Activated CD8-positive, alpha-beta T cell treated with anti-CD3 and anti-CD28 coated beads, Interleukin-2, amount 10 ng/mL, durations not matched to agents 7 days and 5 days (primary cell): ENCODE measurements at regions of chr7 and their contacts with region 1.

Region 1: DNA sequence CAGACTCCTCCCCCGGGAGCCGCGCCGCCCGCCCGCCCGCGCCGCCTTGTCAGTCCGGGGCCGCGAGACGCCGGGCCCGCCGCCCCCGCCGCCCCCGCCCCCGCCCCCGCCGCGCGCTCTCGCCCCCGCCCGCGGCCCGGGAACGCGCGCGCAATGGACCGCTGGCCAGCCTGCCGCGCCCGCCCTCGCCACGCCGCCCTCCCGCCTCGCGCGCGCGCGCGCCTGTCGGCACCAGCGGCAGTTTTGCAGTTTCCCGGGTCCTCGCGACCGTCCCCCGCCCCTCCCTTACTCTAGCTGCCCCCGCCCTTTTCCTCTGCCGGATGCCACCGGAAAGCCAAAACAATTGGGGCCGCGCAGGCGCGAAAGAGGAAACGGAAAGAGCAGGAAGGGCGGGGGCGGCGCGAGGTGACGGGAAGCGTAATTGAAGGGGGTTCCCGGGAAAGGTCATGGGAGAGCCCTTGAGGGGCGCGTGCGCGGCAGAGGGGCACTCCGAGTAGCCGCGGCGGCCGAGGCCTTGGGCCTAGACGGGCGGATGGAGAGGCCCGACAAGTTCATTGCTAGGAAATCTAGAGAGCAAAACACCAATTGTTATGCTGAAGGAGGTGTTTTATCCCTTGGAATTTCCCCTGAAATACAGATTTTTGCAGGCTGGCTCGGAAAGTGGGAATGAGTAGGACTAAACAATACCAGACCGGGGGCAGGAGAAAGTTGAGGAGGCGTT is 400 bp upstream of the KBTBD2 start:
- DNase-seq: peak; percentile 98
- ATAC-seq: peak; percentile 62
- H3K4me3 Mint-ChIP-seq: peak overlapping the region; percentile 80
- H3K27ac Mint-ChIP-seq: peak overlapping the region; percentile 94
- H3K4me1 Mint-ChIP-seq: peaks cover 40% of the 10 kb centered on the region
- H3K27me3 Mint-ChIP-seq: peaks cover 4% of the 10 kb centered on the region

Region 2: GRCh38 chr7:32495298-32496176 is 396.4 kb before region 1 on chr7 and contains the start of gene AVL9:
- CTCF ChIA-PET with region 1: no interaction called
- POLR2A ChIA-PET with region 1: interaction called, 16 read pairs
- DNase-seq: peak; percentile 99
- ATAC-seq: peak; percentile 94
- H3K4me3 Mint-ChIP-seq: peak within 1 kb of the TSS; percentile 81
- H3K27ac Mint-ChIP-seq: peak within 1 kb of the TSS; percentile 99
- H3K4me1 Mint-ChIP-seq: peaks cover 44% of the 10 kb centered on the region
- H3K27me3 Mint-ChIP-seq: no peaks in the 10 kb centered on the region
- total RNA-seq, gene AVL9: 29.6 to 30.1 TPM

Region 3: GRCh38 chr7:32905175-32905662 is 13.3 kb after region 1 on chr7:
- CTCF ChIA-PET with region 1: interaction called, 9 read pairs
- POLR2A ChIA-PET with region 1: interaction called, 71 read pairs
- DNase-seq: peak; percentile 93
- ATAC-seq: peak; percentile 97
- H3K4me3 Mint-ChIP-seq: peak overlapping the region; percentile 77
- H3K27ac Mint-ChIP-seq: peak overlapping the region; percentile 95
- H3K4me1 Mint-ChIP-seq: peaks cover 21% of the 10 kb centered on the region
- H3K27me3 Mint-ChIP-seq: no peaks in the 10 kb centered on the region

Region 4: DNA sequence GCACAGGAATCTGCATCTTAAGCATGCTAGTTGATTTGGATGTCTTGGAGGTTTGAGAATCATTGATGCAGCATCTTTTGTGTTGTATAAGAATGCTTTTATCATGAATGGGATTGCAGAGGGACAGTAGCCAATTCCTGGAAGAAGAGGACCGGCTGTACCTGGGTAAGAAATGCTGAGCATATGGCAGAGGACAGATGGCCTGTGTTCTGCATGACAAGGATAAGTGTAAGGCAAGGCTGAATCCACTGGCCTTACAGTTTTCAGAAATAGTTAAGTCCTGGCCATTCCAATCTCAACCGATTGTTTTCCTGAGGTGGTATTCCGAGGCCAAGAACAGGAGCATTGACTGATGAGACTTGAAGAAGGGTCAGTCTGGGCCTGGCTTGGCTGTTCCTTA is 24.0 kb after region 1 on chr7:
- CTCF ChIA-PET with region 1: no interaction called
- POLR2A ChIA-PET with region 1: no interaction called
- DNase-seq: no peak
- ATAC-seq: no peak
- H3K4me3 Mint-ChIP-seq: no peak overlapping the region
- H3K27ac Mint-ChIP-seq: no peak overlapping the region
- H3K4me1 Mint-ChIP-seq: peaks cover 3% of the 10 kb centered on the region
- H3K27me3 Mint-ChIP-seq: no peaks in the 10 kb centered on the region

Region 5: GRCh38 chr7:32942786-32943653 is 51.1 kb after region 1 on chr7:
- CTCF ChIA-PET with region 1: interaction called, 12 read pairs
- POLR2A ChIA-PET with region 1: interaction called, 10 read pairs
- DNase-seq: peak; percentile 63
- ATAC-seq: peak; percentile 86
- H3K4me3 Mint-ChIP-seq: peak overlapping the region; percentile 63
- H3K27ac Mint-ChIP-seq: no peak overlapping the region
- H3K4me1 Mint-ChIP-seq: peaks cover 17% of the 10 kb centered on the region
- H3K27me3 Mint-ChIP-seq: peaks cover 16% of the 10 kb centered on the region

Region 6: GRCh38 chr7:33040803-33041516 is 149.0 kb after region 1 on chr7:
- CTCF ChIA-PET with region 1: no interaction called
- POLR2A ChIA-PET with region 1: interaction called, 10 read pairs
- DNase-seq: peak; percentile 84
- ATAC-seq: peak; percentile 98
- H3K4me3 Mint-ChIP-seq: peak overlapping the region; percentile 78
- H3K27ac Mint-ChIP-seq: peak overlapping the region; percentile 73
- H3K4me1 Mint-ChIP-seq: peaks cover 43% of the 10 kb centered on the region
- H3K27me3 Mint-ChIP-seq: no peaks in the 10 kb centered on the region